B cell (primary cell): ENCODE measurements at regions of chr3 and their contacts with region 1.

Region 1: DNA sequence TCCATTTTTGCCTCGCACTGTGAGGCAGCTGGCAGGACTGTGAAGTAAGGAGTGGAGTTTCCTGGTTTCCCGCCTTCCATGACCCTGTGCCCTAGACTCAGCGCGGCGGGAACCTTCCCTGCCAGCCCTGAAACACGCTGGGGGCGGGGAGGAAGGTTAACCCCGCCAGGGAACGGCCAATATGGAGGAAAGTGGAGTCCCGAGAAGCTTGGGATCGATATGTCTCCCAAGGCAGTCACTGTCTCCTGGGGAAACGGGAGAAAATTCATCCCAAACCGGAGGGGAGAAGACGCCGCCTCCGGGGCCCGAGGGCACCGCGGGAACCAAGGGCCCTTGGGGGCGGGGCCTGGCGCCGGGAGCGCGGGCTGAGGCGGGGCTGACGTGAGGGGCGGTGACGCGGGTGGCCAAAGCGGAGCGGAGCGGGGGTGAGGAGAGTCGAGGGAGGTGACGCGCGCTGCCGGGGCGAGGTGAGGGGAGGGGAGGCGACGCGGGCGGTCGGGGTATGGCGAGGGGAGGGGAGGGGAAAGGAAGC is at the start of gene HMCES:
- DNase-seq: peak; percentile 94
- ATAC-seq: peak; percentile 72
- H3K4me3 ChIP-seq: peak within 1 kb of the TSS; percentile 79 to 92 (median 88)
- H3K4me3 Mint-ChIP-seq: peak within 1 kb of the TSS; percentile 95
- H3K27ac ChIP-seq: peak within 1 kb of the TSS; percentile 86
- H3K27ac Mint-ChIP-seq: peak within 1 kb of the TSS; percentile 91
- H3K4me1 ChIP-seq: peaks cover 67 to 73% of the 10 kb centered on the region in 2 donors
- H3K4me1 Mint-ChIP-seq: peaks cover 73% of the 10 kb centered on the region
- H3K27me3 ChIP-seq: peaks cover 0 to 4% (median 0%) of the 10 kb centered on the region in 4 experiments
- H3K27me3 Mint-ChIP-seq: peaks cover 5% of the 10 kb centered on the region
- CTCF ChIP-seq: no peak
- total RNA-seq, gene HMCES: 22.1 and 22.5 TPM in 2 replicates

Region 2: GRCh38 chr3:128348805-128349531 is 929.5 kb before region 1 on chr3:
- CTCF ChIA-PET with region 1: no interaction called
- POLR2A ChIA-PET with region 1: no interaction called
- intact Hi-C with region 1: no loop called
- DNase-seq: no peak
- ATAC-seq: no peak
- H3K4me3 ChIP-seq: no peak overlapping the region
- H3K4me3 Mint-ChIP-seq: no peak overlapping the region
- H3K27ac ChIP-seq: no peak overlapping the region
- H3K27ac Mint-ChIP-seq: no peak overlapping the region
- H3K4me1 ChIP-seq: peaks cover 7 to 9% of the 10 kb centered on the region in 2 donors
- H3K4me1 Mint-ChIP-seq: peaks cover 20% of the 10 kb centered on the region
- H3K27me3 ChIP-seq: no peaks in the 10 kb centered on the region
- H3K27me3 Mint-ChIP-seq: no peaks in the 10 kb centered on the region
- CTCF ChIP-seq: no peak

Region 3: DNA sequence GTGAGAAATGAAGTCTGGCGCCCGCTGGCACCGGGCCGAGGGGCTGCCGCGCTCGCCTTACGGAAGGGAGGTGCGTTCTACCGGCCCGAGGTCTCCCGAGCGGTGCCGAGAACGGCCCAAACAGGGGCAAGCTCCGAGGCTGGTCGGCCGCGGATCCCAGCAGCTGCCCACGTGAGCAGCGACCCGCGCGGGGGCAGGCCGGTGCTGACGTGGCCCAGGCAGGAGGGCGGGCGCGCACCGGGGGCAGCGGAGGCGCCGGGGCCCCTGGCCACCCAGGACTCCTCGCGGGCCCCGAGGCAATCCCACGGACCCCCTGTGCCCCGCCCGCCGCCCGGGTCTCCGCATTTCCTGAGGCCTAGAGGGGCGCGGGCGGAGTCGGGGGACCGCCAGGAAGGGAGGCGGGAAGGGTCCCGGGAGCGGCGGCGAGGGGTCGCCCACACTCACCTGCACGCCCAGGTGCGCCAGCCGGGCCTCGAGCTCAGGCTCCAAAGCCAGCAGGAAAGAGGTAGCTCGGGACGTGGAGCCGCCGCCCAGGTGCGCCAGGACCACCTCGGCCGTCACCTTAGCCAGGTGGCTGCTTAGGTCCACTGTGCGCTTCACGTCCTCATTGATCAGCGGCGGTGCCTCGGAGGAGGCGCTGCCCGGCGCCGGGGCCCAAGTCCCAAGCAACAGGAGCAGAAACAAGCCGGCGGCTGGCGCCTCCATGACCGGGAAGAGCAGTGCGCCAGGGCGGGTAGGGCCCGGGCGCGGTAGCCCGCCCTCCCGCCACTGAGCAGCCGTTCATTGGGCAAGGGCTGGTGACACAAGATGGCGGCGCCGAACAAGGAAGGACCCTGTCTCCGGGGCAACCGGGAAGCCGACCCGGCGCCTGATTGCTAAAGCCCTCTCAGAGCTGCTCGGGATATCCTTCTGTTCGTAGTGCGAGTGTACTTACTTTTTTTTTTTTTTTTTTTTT is 628.1 kb before region 1 on chr3 and contains the start of gene RPN1:
- CTCF ChIA-PET with region 1: no interaction called
- POLR2A ChIA-PET with region 1: no interaction called
- intact Hi-C with region 1: loop called (anchors 2 kb)
- DNase-seq: peak; percentile 96
- ATAC-seq: peak; percentile 97
- H3K4me3 ChIP-seq: peak within 1 kb of the TSS; percentile 74 to 100 (median 90)
- H3K4me3 Mint-ChIP-seq: peak within 1 kb of the TSS; percentile 89
- H3K27ac ChIP-seq: peak within 1 kb of the TSS; percentile 89 to 98
- H3K27ac Mint-ChIP-seq: peak within 1 kb of the TSS; percentile 91
- H3K4me1 ChIP-seq: peaks cover 15 to 25% of the 10 kb centered on the region in 2 donors
- H3K4me1 Mint-ChIP-seq: peaks cover 31% of the 10 kb centered on the region
- H3K27me3 ChIP-seq: no peaks in the 10 kb centered on the region
- H3K27me3 Mint-ChIP-seq: no peaks in the 10 kb centered on the region
- CTCF ChIP-seq: no peak
- total RNA-seq, gene RPN1: 80.6 and 83.2 TPM in 2 replicates

Region 4: GRCh38 chr3:129120254-129121004 is 158.1 kb before region 1 on chr3:
- CTCF ChIA-PET with region 1: no interaction called
- POLR2A ChIA-PET with region 1: no interaction called
- intact Hi-C with region 1: loop called (anchors 2 kb)
- DNase-seq: peak; percentile 93
- ATAC-seq: peak; percentile 61
- H3K4me3 ChIP-seq: peak overlapping the region; percentile 68 to 81 (median 76)
- H3K4me3 Mint-ChIP-seq: peak overlapping the region; percentile 88
- H3K27ac ChIP-seq: peak overlapping the region; percentile 61 to 62
- H3K27ac Mint-ChIP-seq: peak overlapping the region; percentile 84
- H3K4me1 ChIP-seq: peaks cover 42 to 46% of the 10 kb centered on the region in 2 donors
- H3K4me1 Mint-ChIP-seq: peaks cover 53% of the 10 kb centered on the region
- H3K27me3 ChIP-seq: no peaks in the 10 kb centered on the region
- H3K27me3 Mint-ChIP-seq: no peaks in the 10 kb centered on the region
- CTCF ChIP-seq: peak; percentile 30

Region 5: GRCh38 chr3:129233538-129233937 is 45.0 kb before region 1 on chr3:
- CTCF ChIA-PET with region 1: no interaction called
- POLR2A ChIA-PET with region 1: interaction called, 4 read pairs
- intact Hi-C with region 1: loop called (anchors 1 kb)
- DNase-seq: peak; percentile 95
- ATAC-seq: peak; percentile 94
- H3K4me3 ChIP-seq: no peak overlapping the region
- H3K4me3 Mint-ChIP-seq: peak overlapping the region; percentile 50
- H3K27ac ChIP-seq: peak overlapping the region; percentile 71 to 87
- H3K27ac Mint-ChIP-seq: peak overlapping the region; percentile 97
- H3K4me1 ChIP-seq: peaks cover 28 to 36% of the 10 kb centered on the region in 2 donors
- H3K4me1 Mint-ChIP-seq: peaks cover 47% of the 10 kb centered on the region
- H3K27me3 ChIP-seq: no peaks in the 10 kb centered on the region
- H3K27me3 Mint-ChIP-seq: no peaks in the 10 kb centered on the region
- CTCF ChIP-seq: no peak

Region 6: DNA sequence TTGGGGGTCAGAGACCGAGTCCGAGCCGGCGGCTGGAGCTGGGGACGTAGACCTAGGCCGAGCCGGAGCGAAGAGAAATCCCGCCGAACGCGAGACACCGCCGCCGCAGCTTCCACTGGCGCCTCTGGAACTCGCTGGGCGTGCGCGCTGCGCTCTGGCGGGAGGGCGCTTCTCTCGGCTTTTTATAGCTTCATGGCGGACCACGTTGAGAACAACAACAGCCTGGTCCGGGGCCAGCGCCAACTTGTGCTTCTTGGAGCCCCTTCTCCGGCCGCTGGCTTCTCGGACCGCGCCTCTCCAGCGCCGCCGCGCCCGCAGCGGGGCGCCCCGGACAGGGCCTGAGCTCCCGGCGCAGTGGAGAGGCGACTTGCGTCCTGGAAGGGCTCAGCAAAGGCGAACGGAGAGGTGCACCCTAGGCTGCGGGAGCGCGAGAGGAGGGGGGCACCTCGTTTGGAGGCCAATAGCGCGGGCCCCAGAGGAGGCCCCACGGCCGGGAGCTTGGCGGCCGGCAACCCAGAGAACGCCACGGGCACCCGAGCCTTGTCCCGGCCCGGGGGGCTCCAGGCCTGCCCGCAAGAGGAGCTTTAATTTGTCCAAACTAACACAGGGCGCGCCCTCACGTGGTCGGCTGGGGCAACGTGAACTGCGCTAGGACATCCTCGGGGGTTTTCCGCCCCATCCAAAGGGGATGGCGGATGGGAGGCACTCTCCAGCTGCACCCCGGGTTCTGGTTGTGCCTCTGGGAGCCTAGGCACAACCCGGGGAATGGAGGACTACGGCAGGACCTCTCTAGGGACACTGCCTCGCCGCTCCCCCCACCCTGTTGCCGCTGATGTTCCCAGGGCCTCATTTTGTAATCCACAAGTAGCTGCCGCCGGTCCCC is 37.9 kb after region 1 on chr3:
- CTCF ChIA-PET with region 1: interaction called, 58 read pairs
- POLR2A ChIA-PET with region 1: interaction called, 30 read pairs
- intact Hi-C with region 1: loop called (anchors 1 kb)
- DNase-seq: peak; percentile 88
- ATAC-seq: peak; percentile 45
- H3K4me3 ChIP-seq: peak overlapping the region; percentile 30 to 84 (median 82)
- H3K4me3 Mint-ChIP-seq: peak overlapping the region; percentile 82
- H3K27ac ChIP-seq: peak overlapping the region in 1 of 2 donors; percentile 78
- H3K27ac Mint-ChIP-seq: peak overlapping the region; percentile 87
- H3K4me1 ChIP-seq: peaks cover 26 to 40% of the 10 kb centered on the region in 2 donors
- H3K4me1 Mint-ChIP-seq: peaks cover 27% of the 10 kb centered on the region
- H3K27me3 ChIP-seq: peaks cover 0 to 30% (median 15%) of the 10 kb centered on the region in 4 experiments
- H3K27me3 Mint-ChIP-seq: peaks cover 18% of the 10 kb centered on the region
- CTCF ChIP-seq: peak; percentile 71

Region 7: DNA sequence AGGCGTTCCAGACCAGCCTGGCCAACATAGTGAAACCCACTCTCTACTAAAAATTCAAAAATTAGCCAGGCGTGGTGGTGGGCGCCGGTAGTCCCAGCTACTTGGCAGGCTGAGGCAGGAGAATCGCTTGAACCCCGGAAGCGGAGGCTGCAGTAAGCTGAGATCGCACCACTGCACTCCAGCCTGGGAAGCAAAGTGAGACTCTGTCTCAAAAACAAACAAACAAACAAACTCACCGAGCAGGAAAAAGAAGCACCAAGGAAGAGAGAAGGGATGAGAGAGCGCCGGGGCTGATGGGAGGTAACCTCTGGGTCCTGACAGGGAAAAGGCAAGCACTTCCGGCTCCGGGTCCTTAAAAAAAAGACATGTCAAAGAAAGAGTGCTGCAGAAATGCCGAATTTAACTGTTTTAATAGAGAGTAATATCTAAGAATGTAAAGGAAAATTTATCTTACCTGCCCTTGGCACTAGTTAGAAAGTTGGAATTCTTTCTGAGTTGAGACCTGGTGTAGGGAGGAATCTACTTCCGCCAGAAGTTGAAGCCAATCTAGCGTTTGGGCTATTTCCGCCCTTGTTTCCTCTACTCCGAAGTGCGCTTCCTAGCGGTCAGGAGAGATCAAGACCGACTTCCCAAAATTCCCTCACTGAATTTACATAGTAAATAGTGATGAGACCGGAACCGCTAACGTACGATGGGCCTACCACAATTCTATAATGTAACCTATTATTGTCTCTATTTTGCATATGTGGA is 120.8 kb after region 1 on chr3:
- CTCF ChIA-PET with region 1: no interaction called
- POLR2A ChIA-PET with region 1: no interaction called
- intact Hi-C with region 1: loop called (anchors 10 kb)
- DNase-seq: peak; percentile 94
- ATAC-seq: peak; percentile 86
- H3K4me3 ChIP-seq: peak overlapping the region; percentile 76 to 99 (median 89)
- H3K4me3 Mint-ChIP-seq: peak overlapping the region; percentile 96
- H3K27ac ChIP-seq: peak overlapping the region; percentile 88 to 95
- H3K27ac Mint-ChIP-seq: peak overlapping the region; percentile 94
- H3K4me1 ChIP-seq: peaks cover 20 to 22% of the 10 kb centered on the region in 2 donors
- H3K4me1 Mint-ChIP-seq: peaks cover 35% of the 10 kb centered on the region
- H3K27me3 ChIP-seq: no peaks in the 10 kb centered on the region
- H3K27me3 Mint-ChIP-seq: no peaks in the 10 kb centered on the region
- CTCF ChIP-seq: peak; percentile 90